Left cardiac atrium (tissue), 4 donors: ENCODE measurements at regions of chrX and their contacts with region 1.

Region 1: GRCh38 chrX:104195489-104196084 is 29.3 kb downstream of the FAM199X start:
- DNase-seq: no peak
- ATAC-seq: no peak

Region 2: GRCh38 chrX:104270920-104271512 is 75.4 kb after region 1 on chrX:
- intact Hi-C with region 1: loop called in 1 of 2 experiments (anchors 5 kb)
- DNase-seq: no peak
- ATAC-seq: peak; percentile 29 to 72